Mucosa of descending colon (tissue), 3 donors: ENCODE measurements at regions of chr6 and their contacts with region 1.

Region 1: DNA sequence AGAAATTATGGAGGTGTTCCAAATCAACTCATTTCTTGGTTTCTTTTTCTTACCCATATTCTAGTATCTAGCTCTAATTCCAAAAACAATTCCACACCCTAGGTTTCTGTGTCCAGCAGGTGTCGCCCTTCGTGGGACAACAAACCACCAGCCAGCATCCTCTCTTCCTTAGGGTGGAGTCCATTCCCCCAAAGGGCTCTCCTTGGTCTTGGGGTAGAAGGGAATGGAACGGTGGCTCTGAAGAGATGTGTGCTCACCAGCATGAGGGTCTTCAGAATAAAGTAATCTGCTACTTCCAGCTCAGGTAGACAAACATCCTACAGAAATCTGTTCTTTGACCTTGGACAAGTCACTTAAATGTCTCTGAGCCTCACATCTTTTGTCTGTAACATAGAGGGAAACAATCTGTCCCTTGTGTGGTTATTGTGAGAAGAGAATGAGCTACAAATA is 7.2 kb downstream of the HLA-DMB start:
- DNase-seq: peak; percentile 63 to 96 (median 80)
- ATAC-seq: peak; percentile 89
- H3K4me3 ChIP-seq: no peak overlapping the region
- H3K4me1 ChIP-seq: no peaks in the 10 kb centered on the region
- CTCF ChIP-seq: peak; percentile 66

Region 2: GRCh38 chr6:32984605-32985389 is 51.1 kb after region 1 on chr6:
- intact Hi-C with region 1: loop called (anchors 2 to 10 kb)
- DNase-seq: peak; percentile 92 to 100 (median 93)
- ATAC-seq: peak; percentile 88
- H3K4me3 ChIP-seq: no peak overlapping the region
- H3K4me1 ChIP-seq: peaks cover 48% of the 10 kb centered on the region
- CTCF ChIP-seq: peak; percentile 63